H1 (cell line): ENCODE measurements at regions of chr1 and their contacts with region 1.

Region 1: DNA sequence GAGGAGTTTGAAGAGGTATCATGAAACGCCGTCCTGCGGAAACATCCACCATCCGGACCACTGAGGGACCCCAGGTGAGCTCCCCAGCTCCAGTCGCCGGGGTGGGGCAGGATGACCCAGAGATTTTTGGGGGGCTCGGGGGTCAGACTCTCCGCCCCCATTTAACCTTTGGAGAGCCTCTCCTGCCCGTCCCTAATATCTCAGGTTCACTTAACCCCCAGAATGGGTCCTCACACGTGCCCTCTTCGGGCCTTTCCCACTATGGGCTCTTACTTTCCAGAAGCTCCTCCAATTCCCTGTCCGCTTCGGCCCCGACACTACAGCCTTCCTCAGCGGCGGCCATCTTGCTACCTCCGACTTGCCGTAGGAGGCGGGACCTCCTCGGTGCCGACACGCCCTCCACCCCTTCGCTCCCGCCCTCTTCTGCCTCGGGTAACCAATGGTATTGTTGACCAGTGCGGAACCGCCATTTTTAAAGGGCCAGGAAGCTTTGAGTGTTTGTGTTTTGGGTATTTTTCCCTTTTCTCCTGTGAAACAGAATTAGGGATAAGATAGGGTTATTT is at the start of gene PEX19:
- DNase-seq: peak; percentile 86 to 95
- H3K4me3 ChIP-seq: peak within 1 kb of the TSS; percentile 87 to 98 (median 90)
- H3K27ac ChIP-seq: peak within 1 kb of the TSS; percentile 81
- H3K4me1 ChIP-seq: peaks cover 5 to 6% (median 5%) of the 10 kb centered on the region in 4 experiments; a peak in 6 of 7 replicates
- H3K27me3 ChIP-seq: no peaks in the 10 kb centered on the region
- CTCF ChIP-seq: no peak
- EP300 ChIP-seq: no peak
- POLR2A ChIP-seq: peak; percentile 87 to 91
- RAD21 ChIP-seq: no peak
- total RNA-seq, gene PEX19: 80.2 TPM in 2 replicates

Region 2: DNA sequence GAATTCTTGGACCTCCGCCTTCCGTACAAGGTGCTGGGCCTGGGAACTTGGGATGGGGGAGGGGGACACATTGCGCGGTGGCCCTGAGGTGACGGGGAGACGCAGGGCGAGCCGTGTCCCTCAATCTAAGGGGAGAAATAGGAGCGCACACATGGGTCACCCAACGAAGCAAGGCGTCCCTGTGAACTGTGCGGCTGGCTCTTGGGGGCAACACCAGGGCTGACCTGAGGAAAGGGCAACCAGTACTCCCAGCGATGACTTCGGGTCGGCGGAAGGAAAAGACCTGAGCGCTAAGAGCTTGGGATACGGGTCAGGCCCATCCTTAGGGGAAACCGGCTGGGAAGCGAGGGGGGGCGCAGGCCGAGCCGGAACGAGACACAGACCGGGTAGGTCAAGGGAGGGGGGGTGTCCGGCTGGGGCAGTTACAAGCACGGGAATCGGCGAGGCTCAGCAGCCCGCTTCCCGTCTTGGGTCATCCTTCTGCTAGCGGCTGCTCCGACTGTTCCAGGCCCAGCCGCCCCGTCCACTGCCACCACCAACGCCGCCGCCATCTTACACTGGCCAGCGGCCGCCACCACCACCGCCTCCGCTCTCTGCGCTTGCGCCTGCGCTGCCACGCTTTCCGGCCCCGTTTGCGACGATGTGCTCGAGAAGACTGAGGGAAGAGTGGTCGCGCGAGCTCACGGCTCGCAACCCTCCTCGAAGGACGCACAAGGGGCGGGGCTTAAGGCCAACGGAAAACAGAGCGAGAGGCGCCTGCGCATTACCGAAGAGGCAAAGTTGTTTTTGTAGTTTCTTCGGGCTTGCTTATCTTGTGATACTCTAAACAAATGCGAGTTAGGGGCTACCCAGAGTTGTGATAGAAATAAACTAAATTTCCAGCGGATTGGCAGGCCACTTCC is 22.7 kb before region 1 on chr1 and contains the start of gene DCAF8:
- CTCF ChIA-PET with region 1: interaction called, 4 read pairs
- POLR2A ChIA-PET with region 1: interaction called, 79 read pairs
- DNase-seq: peak; percentile 92 to 98
- H3K4me3 ChIP-seq: peak within 1 kb of the TSS; percentile 91 to 99 (median 96)
- H3K27ac ChIP-seq: peak within 1 kb of the TSS; percentile 97
- H3K4me1 ChIP-seq: peaks cover 2 to 13% (median 5%) of the 10 kb centered on the region in 4 experiments; a peak in 6 of 7 replicates
- H3K27me3 ChIP-seq: no peaks in the 10 kb centered on the region
- CTCF ChIP-seq: no peak
- EP300 ChIP-seq: no peak
- POLR2A ChIP-seq: peak; percentile 98 to 99
- RAD21 ChIP-seq: no peak
- total RNA-seq, gene DCAF8: 110 and 113 TPM in 2 replicates

Region 3: GRCh38 chr1:160267284-160267991 is 17.4 kb before region 1 on chr1:
- CTCF ChIA-PET with region 1: interaction called, 4 read pairs
- POLR2A ChIA-PET with region 1: interaction called, 79 read pairs
- DNase-seq: no peak
- H3K4me3 ChIP-seq: no peak overlapping the region
- H3K27ac ChIP-seq: no peak overlapping the region
- H3K4me1 ChIP-seq: peaks cover 0 to 1% (median 0%) of the 10 kb centered on the region in 4 experiments; a peak in 1 of 7 replicates
- H3K27me3 ChIP-seq: no peaks in the 10 kb centered on the region; a peak in 1 of 7 replicates
- CTCF ChIP-seq: no peak
- EP300 ChIP-seq: no peak
- POLR2A ChIP-seq: no peak
- RAD21 ChIP-seq: no peak

Region 4: DNA sequence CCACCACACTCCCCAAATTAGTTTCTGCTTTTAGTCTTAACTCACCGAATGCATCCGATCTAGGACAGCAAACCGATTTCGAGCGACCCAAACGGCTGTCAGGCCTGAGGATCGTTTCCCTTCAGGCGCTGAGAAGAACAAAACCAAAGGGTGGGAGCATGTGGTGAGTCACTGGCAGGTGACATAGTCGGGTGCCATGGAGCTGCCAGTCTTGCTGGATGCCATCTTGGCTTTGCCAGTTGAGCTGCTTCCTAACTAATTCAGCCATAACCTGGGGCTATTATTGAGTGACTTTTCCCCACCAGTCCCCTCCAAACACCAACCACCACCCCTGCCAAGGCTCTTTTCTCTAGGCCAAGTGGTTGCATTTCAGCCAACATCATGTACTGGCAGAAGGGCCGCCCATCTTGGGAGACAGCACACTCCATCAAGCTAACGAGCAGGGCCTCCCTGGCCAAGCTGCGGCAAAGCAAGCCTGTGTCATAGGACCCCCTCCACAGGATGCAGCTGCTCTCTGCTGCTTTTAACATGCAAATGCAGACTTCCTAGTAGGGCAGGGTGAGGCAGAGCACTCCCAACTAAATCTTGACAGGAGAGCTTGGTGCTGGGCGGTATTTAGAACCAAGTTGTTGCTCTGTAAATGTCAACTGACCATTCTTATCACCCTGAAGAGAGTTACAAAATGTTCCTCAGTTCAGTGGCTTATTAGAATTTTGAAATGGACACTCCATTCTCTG is 22.4 kb after region 1 on chr1:
- CTCF ChIA-PET with region 1: interaction called, 83 read pairs
- POLR2A ChIA-PET with region 1: interaction called, 13 read pairs
- DNase-seq: peak in 1 of 2 experiments; percentile 56
- H3K4me3 ChIP-seq: 0 out of 8 replicates have a peak overlapping the region, but pooled peaks of 1 of the 4 experiments have one; percentile 12
- H3K27ac ChIP-seq: no peak overlapping the region
- H3K4me1 ChIP-seq: peaks cover 4 to 11% (median 8%) of the 10 kb centered on the region in 4 experiments
- H3K27me3 ChIP-seq: no peaks in the 10 kb centered on the region
- CTCF ChIP-seq: no peak
- EP300 ChIP-seq: no peak
- POLR2A ChIP-seq: no peak
- RAD21 ChIP-seq: no peak

Region 5: DNA sequence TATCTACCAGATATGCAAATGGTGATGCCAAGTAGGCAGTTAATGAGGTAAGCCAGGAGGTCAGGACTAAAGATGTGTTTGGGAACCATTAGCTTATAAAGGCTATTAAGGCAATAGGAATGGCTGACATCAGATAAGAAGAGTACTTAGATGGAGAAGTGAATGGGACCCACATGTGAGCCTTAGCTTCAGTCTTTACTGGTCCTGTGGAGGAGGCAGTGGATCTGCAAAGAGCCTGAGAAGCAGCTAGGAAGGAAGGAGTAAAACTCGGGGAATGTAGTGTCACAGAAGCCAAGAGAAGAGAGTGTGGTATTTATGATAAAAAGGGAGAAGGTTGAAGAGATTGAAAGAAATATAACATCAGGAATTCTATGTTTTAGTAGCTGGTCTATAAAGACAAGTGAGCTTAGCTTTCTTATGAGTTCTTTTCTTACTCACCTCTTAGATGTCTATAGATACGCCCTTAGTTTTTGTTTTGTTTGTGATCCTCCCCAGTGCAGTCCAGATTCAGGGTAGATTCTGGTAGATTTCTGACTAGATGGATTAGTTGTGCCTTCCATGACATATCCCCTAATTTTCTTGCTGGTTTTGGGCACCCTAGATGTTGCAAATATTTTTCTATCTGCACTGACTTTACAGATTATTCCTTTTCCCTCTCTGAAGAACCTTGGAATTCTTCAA is 198.8 kb after region 1 on chr1:
- CTCF ChIA-PET with region 1: no interaction called
- POLR2A ChIA-PET with region 1: no interaction called
- DNase-seq: no peak
- H3K4me3 ChIP-seq: no peak overlapping the region
- H3K27ac ChIP-seq: no peak overlapping the region
- H3K4me1 ChIP-seq: peaks cover 0 to 3% (median 3%) of the 10 kb centered on the region in 4 experiments; a peak in 3 of 7 replicates
- H3K27me3 ChIP-seq: no peaks in the 10 kb centered on the region
- CTCF ChIP-seq: no peak
- EP300 ChIP-seq: no peak
- POLR2A ChIP-seq: no peak
- RAD21 ChIP-seq: no peak

Region 6: DNA sequence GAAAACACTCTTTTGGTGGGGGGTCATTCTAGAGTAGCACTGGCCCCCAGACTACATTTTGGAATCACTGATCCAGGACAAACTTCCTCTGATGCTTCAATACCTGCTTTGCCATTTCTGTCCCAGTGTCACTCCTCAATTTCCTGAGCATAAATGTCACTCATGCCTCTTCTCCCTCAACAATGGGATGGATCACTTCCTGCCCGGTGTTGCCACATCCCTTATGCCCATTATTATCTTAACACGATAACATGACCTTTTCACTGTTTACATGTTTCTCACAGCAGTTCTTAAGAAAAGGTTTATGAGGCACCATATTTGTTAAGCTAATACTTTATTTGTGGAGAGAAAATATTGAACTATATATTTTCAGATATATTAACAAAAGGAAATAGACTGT is 604.1 kb after region 1 on chr1:
- CTCF ChIA-PET with region 1: no interaction called
- POLR2A ChIA-PET with region 1: no interaction called
- DNase-seq: no peak
- H3K4me3 ChIP-seq: no peak overlapping the region
- H3K27ac ChIP-seq: no peak overlapping the region
- H3K4me1 ChIP-seq: no peaks in the 10 kb centered on the region
- H3K27me3 ChIP-seq: no peaks in the 10 kb centered on the region
- CTCF ChIP-seq: no peak
- EP300 ChIP-seq: no peak
- POLR2A ChIP-seq: no peak
- RAD21 ChIP-seq: no peak